Activated CD8-positive, alpha-beta T cell treated with anti-CD3 and anti-CD28 coated beads for 36 hours (primary cell): ENCODE measurements at regions of chr9 and their contacts with region 1.

Region 1: GRCh38 chr9:16028548-16028947 is 475.7 kb downstream of the CCDC171 start:
- DNase-seq: no peak
- ATAC-seq: no peak
- H3K4me3 Mint-ChIP-seq: no peak overlapping the region
- H3K27ac Mint-ChIP-seq: no peak overlapping the region
- H3K4me1 Mint-ChIP-seq: peaks cover 8% of the 10 kb centered on the region
- H3K27me3 Mint-ChIP-seq: no peaks in the 10 kb centered on the region
- CTCF ChIP-seq: no peak

Region 2: DNA sequence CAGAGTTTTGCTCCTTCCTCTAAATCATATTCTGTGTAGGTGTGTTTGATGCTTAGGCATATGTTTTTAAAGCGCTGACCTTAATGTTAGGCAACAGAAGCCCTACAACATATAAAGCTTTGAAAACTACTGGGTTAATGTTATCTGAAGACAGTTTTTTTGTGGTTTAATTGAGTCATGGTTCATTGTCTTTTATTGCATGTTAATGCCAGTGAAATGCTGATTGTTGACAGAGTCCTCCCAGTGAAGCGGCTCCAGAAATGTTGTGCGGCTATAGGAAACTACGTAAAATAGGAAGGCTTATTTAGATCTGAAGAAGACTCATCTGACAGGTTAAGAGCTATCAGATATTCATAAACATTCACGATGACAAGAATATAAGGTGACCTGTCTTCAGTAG is 51.1 kb before region 1 on chr9:
- CTCF ChIA-PET with region 1: no interaction called
- POLR2A ChIA-PET with region 1: no interaction called
- intact Hi-C with region 1: no loop called
- DNase-seq: no peak
- ATAC-seq: no peak
- H3K4me3 Mint-ChIP-seq: no peak overlapping the region
- H3K27ac Mint-ChIP-seq: no peak overlapping the region
- H3K4me1 Mint-ChIP-seq: no peaks in the 10 kb centered on the region
- H3K27me3 Mint-ChIP-seq: no peaks in the 10 kb centered on the region
- CTCF ChIP-seq: no peak

Region 3: DNA sequence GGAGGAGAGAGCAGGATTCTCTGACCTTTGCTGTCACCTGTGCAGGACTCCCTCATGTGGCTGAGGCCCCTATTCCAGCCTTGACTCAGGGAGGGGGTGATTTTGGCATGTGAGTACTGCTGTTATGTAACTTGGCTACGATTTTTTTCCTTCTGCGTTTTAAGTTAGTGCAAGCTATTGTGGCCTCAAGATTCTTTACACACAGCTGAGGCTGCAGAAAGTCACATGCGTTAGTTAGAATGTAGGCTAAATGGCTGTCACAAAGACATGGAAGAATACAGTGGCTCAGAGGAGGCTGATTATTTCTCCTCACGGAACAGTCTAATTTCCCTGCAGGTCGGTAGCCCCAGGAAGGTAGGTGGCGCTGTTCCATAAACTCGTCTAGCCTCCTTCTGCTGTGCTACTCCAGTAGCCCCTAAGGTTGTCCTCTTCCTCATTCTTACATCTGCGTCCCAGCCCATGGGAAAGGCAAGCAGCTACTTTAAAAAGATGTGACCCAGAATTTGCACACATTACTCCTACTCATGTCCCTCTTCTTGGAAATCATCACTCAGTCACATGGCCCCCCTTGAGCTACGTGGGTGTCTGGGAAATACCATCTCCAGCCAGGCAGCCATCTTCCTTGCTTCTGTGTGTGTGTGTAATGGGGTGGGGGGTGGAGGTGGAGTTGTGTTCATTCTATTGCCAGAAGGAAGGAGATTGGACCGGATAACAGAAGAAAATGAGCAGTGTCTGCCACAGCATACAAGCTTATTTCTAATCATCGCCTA is 10.9 kb after region 1 on chr9:
- CTCF ChIA-PET with region 1: interaction called, 11 read pairs
- POLR2A ChIA-PET with region 1: no interaction called
- intact Hi-C with region 1: no loop called
- DNase-seq: peak; percentile 35
- ATAC-seq: peak; percentile 47
- H3K4me3 Mint-ChIP-seq: no peak overlapping the region
- H3K27ac Mint-ChIP-seq: no peak overlapping the region
- H3K4me1 Mint-ChIP-seq: peaks cover 7% of the 10 kb centered on the region
- H3K27me3 Mint-ChIP-seq: no peaks in the 10 kb centered on the region
- CTCF ChIP-seq: no peak